Left ventricle myocardium inferior (tissue), 1 donor: ENCODE measurements at regions of chr6 and their contacts with region 1.

Region 1: GRCh38 chr6:41787219-41787917 is at the start of gene TOMM6:
- DNase-seq: peak; percentile 95
- H3K4me3 ChIP-seq: peak within 1 kb of the TSS; percentile 90
- H3K27ac ChIP-seq: peak within 1 kb of the TSS; percentile 95
- H3K4me1 ChIP-seq: peaks cover 94% of the 10 kb centered on the region
- H3K27me3 ChIP-seq: no peaks in the 10 kb centered on the region
- CTCF ChIP-seq: peak; percentile 94
- total RNA-seq, gene TOMM6: 177 TPM

Region 2: GRCh38 chr6:41920921-41921711 is 133.7 kb after region 1 on chr6 and contains the starts of genes BYSL and MED20:
- intact Hi-C with region 1: loop called (anchors 10 kb)
- DNase-seq: peak; percentile 90
- H3K4me3 ChIP-seq: peak within 1 kb of the TSS; percentile 92
- H3K27ac ChIP-seq: peak within 1 kb of the TSS; percentile 100
- H3K4me1 ChIP-seq: peaks cover 66% of the 10 kb centered on the region
- H3K27me3 ChIP-seq: no peaks in the 10 kb centered on the region
- CTCF ChIP-seq: peak; percentile 99
- total RNA-seq, gene BYSL: 9.0 TPM
- total RNA-seq, gene MED20: 18.1 TPM